PC-9 (cell line): ENCODE measurements at regions of chr2 and their contacts with region 1.

Region 1: GRCh38 chr2:105398699-105399432 is at the start of gene FHL2:
- DNase-seq: peak; percentile 61 to 81
- H3K4me3 ChIP-seq: peak within 1 kb of the TSS; percentile 100
- H3K27ac ChIP-seq: peak within 1 kb of the TSS; percentile 88
- H3K4me1 ChIP-seq: peaks cover 74% of the 10 kb centered on the region
- H3K27me3 ChIP-seq: no peaks in the 10 kb centered on the region
- CTCF ChIP-seq: peak; percentile 41; the same call in 1 of the 2 replicates
- total RNA-seq, gene FHL2: 109 and 117 TPM in 2 replicates

Region 2: DNA sequence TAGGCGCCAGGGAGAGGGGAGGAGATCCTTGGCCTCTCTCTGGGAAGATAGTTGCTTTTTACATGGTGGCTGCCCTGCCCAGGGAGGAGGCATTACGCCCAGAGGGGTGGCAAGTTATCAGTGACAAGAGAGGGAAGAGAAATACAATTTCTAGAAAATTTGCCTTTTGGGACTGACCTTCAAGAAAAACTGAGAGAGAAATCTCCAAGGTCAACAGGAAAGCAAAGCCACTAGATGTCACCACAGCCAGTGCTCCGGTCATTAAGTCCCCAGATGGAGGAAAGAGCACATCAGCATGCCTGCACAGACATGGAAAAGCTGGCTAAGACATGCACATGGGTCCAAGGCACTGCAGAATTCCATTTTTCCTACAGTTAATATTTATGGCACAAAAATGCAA is 21.0 kb before region 1 on chr2:
- CTCF ChIA-PET with region 1: no interaction called
- POLR2A ChIA-PET with region 1: interaction called, 52 read pairs
- intact Hi-C with region 1: loop called (anchors 2 kb)
- DNase-seq: no peak
- H3K4me3 ChIP-seq: no peak overlapping the region
- H3K27ac ChIP-seq: no peak overlapping the region
- H3K4me1 ChIP-seq: peaks cover 39% of the 10 kb centered on the region
- H3K27me3 ChIP-seq: no peaks in the 10 kb centered on the region
- CTCF ChIP-seq: no peak

Region 3: DNA sequence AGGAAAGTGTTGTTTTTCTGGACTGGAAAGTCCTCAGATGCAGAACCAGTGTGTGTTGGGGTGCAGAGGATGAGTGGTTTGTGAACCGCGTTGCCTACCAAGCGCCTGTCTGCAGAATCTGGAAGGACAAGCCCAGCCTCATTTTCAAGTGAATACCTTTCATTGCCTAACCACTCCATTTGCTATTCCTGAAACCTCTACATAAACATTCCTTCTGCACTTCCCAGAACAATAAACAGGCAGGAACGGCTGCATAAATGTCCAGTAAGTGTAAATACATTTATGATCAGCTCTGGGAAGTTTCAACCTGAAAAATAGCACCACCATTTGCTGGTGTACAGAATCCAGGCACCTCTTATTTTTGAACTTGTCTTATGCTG is 45.3 kb after region 1 on chr2:
- CTCF ChIA-PET with region 1: no interaction called
- POLR2A ChIA-PET with region 1: interaction called, 26 read pairs
- intact Hi-C with region 1: no loop called
- DNase-seq: peak; percentile 52 to 79
- H3K4me3 ChIP-seq: no peak overlapping the region
- H3K27ac ChIP-seq: peak overlapping the region; percentile 50
- H3K4me1 ChIP-seq: peaks cover 75% of the 10 kb centered on the region
- H3K27me3 ChIP-seq: no peaks in the 10 kb centered on the region
- CTCF ChIP-seq: no peak

Region 4: DNA sequence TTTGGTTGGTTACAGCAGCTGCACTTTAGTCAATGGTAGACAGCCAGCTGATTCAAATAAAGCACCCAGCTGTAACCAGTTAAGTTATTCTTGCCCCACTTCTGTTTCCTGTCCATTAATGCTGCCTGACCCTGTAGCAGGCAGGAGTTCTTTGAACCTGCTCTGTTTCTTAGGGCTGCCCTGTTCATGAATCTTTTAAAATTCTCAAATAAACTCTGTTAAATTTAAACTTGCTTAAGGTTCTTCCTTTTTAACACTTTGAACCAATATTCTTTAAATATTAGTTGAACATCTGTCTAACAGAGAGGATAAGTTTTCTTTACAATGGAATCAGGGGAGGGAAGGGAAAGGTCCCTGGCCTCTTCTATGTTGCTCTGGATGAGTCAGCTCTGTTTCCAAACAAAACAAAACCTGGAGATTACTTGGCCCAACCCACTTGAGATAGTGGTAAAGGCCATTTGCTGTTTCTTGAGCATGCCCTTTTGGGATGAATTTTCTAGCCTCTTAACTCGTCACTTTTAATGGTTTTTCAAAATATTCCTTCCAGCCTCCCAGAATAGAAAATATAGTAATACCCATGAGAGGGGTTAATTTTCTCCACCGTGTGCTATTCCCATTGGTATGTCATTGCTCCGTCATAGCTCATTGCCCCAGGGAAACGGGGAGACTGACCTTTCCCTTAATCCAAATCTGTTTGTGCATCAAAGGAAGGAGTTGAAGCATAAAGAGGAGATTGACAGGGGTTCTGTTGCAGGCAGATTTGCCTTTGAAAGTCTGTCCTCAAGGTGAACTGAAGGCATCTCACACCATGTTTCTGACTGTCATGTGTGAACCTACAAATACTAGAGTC is 112.1 kb after region 1 on chr2:
- CTCF ChIA-PET with region 1: interaction called, 6 read pairs
- POLR2A ChIA-PET with region 1: interaction called, 14 read pairs
- intact Hi-C with region 1: no loop called
- DNase-seq: peak; percentile 11 to 71
- H3K4me3 ChIP-seq: no peak overlapping the region
- H3K27ac ChIP-seq: peak overlapping the region; percentile 64
- H3K4me1 ChIP-seq: peaks cover 26% of the 10 kb centered on the region
- H3K27me3 ChIP-seq: no peaks in the 10 kb centered on the region
- CTCF ChIP-seq: no peak